MCF 10A (cell line): ENCODE measurements at regions of chr7 and their contacts with region 1.

Region 1: DNA sequence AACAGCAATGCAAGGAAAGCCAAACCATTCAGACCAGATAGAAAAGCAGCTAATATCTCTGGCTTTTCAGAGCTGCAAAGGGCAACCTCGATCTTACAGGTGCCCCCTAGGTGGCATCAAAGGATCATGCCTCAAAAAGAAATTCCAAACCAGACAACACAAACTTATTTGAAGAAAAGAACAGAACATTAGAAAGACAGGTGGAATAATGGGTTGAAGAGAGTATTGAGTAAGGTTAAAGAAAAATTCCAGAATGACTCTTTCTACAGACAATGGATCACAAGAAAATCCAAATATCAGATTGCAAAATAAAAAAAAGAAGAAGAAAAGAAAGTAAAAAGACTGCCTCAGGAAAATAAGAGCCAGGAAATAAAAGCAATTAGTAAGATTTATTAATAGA is 213.7 kb downstream of the ELMO1 start:
- DNase-seq: peak; percentile 42
- H3K4me3 Mint-ChIP-seq: no peak overlapping the region
- H3K27ac Mint-ChIP-seq: no peak overlapping the region
- H3K4me1 Mint-ChIP-seq: peaks cover 19% of the 10 kb centered on the region
- H3K27me3 Mint-ChIP-seq: peaks cover 30% of the 10 kb centered on the region
- CTCF ChIP-seq: peak; percentile 88

Region 2: GRCh38 chr7:36999626-37000485 is 235.1 kb before region 1 on chr7:
- CTCF ChIA-PET with region 1: no interaction called
- POLR2A ChIA-PET with region 1: no interaction called
- intact Hi-C with region 1: no loop called
- DNase-seq: no peak
- H3K4me3 Mint-ChIP-seq: no peak overlapping the region
- H3K27ac Mint-ChIP-seq: no peak overlapping the region
- H3K4me1 Mint-ChIP-seq: no peaks in the 10 kb centered on the region
- H3K27me3 Mint-ChIP-seq: no peaks in the 10 kb centered on the region
- CTCF ChIP-seq: no peak

Region 3: DNA sequence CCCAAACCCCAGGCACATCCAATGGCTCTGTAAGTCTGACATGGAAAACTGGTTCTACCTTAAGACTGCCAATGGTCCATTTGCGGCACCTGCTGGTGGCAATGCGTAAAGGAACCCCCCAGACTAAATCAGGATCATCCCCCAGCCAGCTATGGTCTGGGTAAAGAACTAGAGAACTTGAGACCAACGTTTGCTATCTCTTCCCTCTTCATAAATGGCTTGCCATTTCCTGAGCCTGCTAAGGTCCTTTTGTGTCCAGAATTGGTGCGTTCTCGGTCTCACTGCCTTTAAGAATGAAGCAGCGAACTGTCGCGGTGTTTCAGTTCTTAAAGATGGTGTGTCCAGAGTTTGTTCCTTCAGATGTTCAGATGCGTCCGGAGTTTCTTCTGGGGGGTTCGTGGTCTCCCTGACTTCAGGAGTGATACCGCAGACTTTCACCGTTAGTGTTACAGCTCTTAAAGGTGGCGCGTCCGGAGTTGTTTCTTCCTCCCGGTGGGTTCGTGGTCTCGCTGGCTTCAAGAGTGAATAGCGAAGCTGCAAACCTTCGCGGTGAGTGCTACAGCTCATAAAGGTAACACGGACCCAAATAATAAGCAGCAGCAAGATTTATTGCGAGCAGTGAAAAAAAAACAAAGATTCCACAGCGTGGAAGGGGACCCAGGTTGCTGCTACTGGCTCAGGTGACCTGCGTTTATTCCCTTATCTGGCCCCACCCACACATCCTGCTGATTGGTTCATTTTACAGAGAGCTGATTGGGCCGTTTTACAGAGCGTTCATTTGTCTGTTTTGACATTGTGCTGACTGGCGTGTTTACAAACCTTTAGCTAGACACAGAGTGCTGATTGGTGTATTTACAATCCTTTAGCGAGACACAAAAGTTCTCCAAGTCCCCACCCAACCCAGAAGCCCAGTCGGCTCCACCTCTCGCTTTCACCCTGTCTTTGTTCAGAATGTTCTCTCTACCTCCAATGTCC is 118.3 kb after region 1 on chr7:
- CTCF ChIA-PET with region 1: interaction called, 7 read pairs
- POLR2A ChIA-PET with region 1: no interaction called
- intact Hi-C with region 1: loop called (anchors 5 kb)
- DNase-seq: peak; percentile 6
- H3K4me3 Mint-ChIP-seq: no peak overlapping the region
- H3K27ac Mint-ChIP-seq: peak overlapping the region; percentile 88
- H3K4me1 Mint-ChIP-seq: peaks cover 17% of the 10 kb centered on the region
- H3K27me3 Mint-ChIP-seq: no peaks in the 10 kb centered on the region
- CTCF ChIP-seq: peak; percentile 11

Region 4: GRCh38 chr7:37510043-37510634 is 275.2 kb after region 1 on chr7:
- CTCF ChIA-PET with region 1: interaction called, 38 read pairs
- POLR2A ChIA-PET with region 1: interaction called, 3 read pairs
- intact Hi-C with region 1: loop called (anchors 1 kb)
- DNase-seq: peak; percentile 51
- H3K4me3 Mint-ChIP-seq: no peak overlapping the region
- H3K27ac Mint-ChIP-seq: no peak overlapping the region
- H3K4me1 Mint-ChIP-seq: no peaks in the 10 kb centered on the region
- H3K27me3 Mint-ChIP-seq: no peaks in the 10 kb centered on the region
- CTCF ChIP-seq: peak; percentile 63

Region 5: DNA sequence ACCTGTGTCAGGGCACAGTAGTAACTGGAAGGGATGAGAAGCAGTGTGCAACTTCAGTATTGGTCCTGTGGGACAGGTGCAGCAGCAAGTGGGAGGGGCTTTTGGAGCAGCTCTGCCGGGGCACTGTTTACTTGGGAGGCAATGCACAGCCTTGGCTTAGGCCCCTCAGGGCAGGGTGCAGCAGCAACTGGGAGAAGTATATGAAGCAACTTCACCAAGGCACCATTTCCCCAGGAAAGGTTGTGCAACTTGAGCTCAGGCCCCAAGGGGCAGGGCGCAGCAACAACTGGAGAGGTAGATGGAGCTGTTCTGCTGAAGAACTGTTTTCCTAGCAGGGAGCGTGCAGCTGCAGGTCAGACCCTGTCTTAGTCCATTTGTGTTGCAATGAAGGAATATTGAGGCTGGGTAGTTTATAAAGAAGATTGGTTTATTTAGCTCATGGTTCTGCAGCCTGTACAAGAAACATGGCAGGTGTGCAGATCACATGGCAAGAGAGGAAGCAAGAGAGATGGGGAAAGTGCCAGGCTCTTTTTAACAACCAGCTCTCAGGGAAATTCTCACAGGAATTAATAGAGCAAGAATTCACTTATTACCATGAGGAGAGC is 459.3 kb after region 1 on chr7:
- CTCF ChIA-PET with region 1: interaction called, 18 read pairs
- POLR2A ChIA-PET with region 1: no interaction called
- intact Hi-C with region 1: loop called (anchors 5 kb)
- DNase-seq: peak; percentile 97
- H3K4me3 Mint-ChIP-seq: no peak overlapping the region
- H3K27ac Mint-ChIP-seq: peak overlapping the region; percentile 28
- H3K4me1 Mint-ChIP-seq: peaks cover 24% of the 10 kb centered on the region
- H3K27me3 Mint-ChIP-seq: no peaks in the 10 kb centered on the region
- CTCF ChIP-seq: no peak

Region 6: GRCh38 chr7:37853474-37853873 is 618.5 kb after region 1 on chr7:
- CTCF ChIA-PET with region 1: interaction called, 54 read pairs
- POLR2A ChIA-PET with region 1: no interaction called
- intact Hi-C with region 1: loop called (anchors 1 kb)
- DNase-seq: peak; percentile 44
- H3K4me3 Mint-ChIP-seq: no peak overlapping the region
- H3K27ac Mint-ChIP-seq: no peak overlapping the region
- H3K4me1 Mint-ChIP-seq: no peaks in the 10 kb centered on the region
- H3K27me3 Mint-ChIP-seq: peaks cover 22% of the 10 kb centered on the region
- CTCF ChIP-seq: peak; percentile 62